CD8-positive, alpha-beta T cell (primary cell): ENCODE measurements at regions of chr9 and their contacts with region 1.

Region 1: GRCh38 chr9:71921190-71921814 is 9.9 kb downstream of the C9orf85 start:
- DNase-seq: no peak
- ATAC-seq: no peak
- H3K4me3 ChIP-seq: no peak overlapping the region
- H3K4me3 Mint-ChIP-seq: no peak overlapping the region
- H3K27ac ChIP-seq: no peak overlapping the region
- H3K27ac Mint-ChIP-seq: no peak overlapping the region
- H3K4me1 ChIP-seq: no peaks in the 10 kb centered on the region
- H3K4me1 Mint-ChIP-seq: peaks cover 25% of the 10 kb centered on the region
- H3K27me3 ChIP-seq: no peaks in the 10 kb centered on the region
- H3K27me3 Mint-ChIP-seq: no peaks in the 10 kb centered on the region
- CTCF ChIP-seq: no peak

Region 2: GRCh38 chr9:71581101-71581500 is 340.2 kb before region 1 on chr9:
- CTCF ChIA-PET with region 1: no interaction called
- POLR2A ChIA-PET with region 1: no interaction called
- intact Hi-C with region 1: no loop called
- DNase-seq: no peak
- ATAC-seq: no peak
- H3K4me3 ChIP-seq: no peak overlapping the region
- H3K4me3 Mint-ChIP-seq: no peak overlapping the region
- H3K27ac ChIP-seq: no peak overlapping the region
- H3K27ac Mint-ChIP-seq: no peak overlapping the region
- H3K4me1 ChIP-seq: no peaks in the 10 kb centered on the region
- H3K4me1 Mint-ChIP-seq: no peaks in the 10 kb centered on the region
- H3K27me3 ChIP-seq: no peaks in the 10 kb centered on the region
- H3K27me3 Mint-ChIP-seq: peaks cover 10% of the 10 kb centered on the region
- CTCF ChIP-seq: no peak

Region 3: DNA sequence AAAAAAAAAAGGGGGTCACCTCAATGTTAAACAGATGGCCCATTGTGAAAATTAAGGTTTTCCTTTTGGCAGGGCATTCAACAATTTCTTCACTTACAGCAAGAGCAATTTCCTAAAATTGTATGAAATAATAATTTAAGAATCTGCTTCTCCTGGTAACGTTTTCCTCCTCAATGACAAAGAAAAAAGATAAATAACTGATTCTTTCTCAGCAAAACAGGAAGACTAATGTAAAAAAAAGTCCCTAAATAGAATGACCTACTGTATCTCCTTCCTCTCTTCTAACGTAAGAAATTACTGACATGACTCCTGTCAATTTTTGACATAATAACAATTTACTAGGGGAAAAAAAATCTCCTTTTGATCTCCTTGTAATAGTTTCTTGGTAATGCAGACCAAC is 35.8 kb before region 1 on chr9:
- CTCF ChIA-PET with region 1: no interaction called
- POLR2A ChIA-PET with region 1: no interaction called
- intact Hi-C with region 1: loop called in 1 of 2 experiments (anchors 5 kb)
- DNase-seq: no peak
- ATAC-seq: no peak
- H3K4me3 ChIP-seq: no peak overlapping the region
- H3K4me3 Mint-ChIP-seq: no peak overlapping the region
- H3K27ac ChIP-seq: peak overlapping the region in 1 of 2 experiments; percentile 1
- H3K27ac Mint-ChIP-seq: no peak overlapping the region
- H3K4me1 ChIP-seq: peaks cover 16% of the 10 kb centered on the region
- H3K4me1 Mint-ChIP-seq: peaks cover 41% of the 10 kb centered on the region
- H3K27me3 ChIP-seq: no peaks in the 10 kb centered on the region
- H3K27me3 Mint-ChIP-seq: no peaks in the 10 kb centered on the region
- CTCF ChIP-seq: no peak

Region 4: DNA sequence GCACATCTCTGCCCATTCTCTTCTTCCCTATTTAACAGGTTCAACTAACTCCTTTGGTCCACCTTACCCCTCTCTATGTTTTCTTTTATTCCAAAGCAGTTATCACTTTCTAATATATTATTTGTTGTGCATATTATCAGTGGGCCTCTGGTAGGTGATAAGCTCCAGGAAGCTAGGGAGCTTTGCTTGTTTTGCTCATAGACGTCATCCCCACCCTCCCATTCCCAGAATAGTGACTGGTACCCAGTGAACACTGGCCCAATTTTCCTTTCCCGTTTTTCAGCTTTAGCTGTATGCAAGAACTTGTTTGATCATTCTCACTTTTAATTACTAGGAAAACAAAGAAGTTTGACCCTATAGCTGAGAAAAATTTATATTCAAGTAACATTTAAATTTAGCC is 17.2 kb before region 1 on chr9:
- CTCF ChIA-PET with region 1: no interaction called
- POLR2A ChIA-PET with region 1: no interaction called
- intact Hi-C with region 1: loop called in 1 of 2 experiments (anchors 2 kb)
- DNase-seq: no peak
- ATAC-seq: no peak
- H3K4me3 ChIP-seq: no peak overlapping the region
- H3K4me3 Mint-ChIP-seq: no peak overlapping the region
- H3K27ac ChIP-seq: no peak overlapping the region
- H3K27ac Mint-ChIP-seq: no peak overlapping the region
- H3K4me1 ChIP-seq: peaks cover 19% of the 10 kb centered on the region
- H3K4me1 Mint-ChIP-seq: peaks cover 83% of the 10 kb centered on the region
- H3K27me3 ChIP-seq: no peaks in the 10 kb centered on the region
- H3K27me3 Mint-ChIP-seq: no peaks in the 10 kb centered on the region
- CTCF ChIP-seq: no peak